ENCODE measurements at regions of chr1 and their contacts with region 1.

Region 1: DNA sequence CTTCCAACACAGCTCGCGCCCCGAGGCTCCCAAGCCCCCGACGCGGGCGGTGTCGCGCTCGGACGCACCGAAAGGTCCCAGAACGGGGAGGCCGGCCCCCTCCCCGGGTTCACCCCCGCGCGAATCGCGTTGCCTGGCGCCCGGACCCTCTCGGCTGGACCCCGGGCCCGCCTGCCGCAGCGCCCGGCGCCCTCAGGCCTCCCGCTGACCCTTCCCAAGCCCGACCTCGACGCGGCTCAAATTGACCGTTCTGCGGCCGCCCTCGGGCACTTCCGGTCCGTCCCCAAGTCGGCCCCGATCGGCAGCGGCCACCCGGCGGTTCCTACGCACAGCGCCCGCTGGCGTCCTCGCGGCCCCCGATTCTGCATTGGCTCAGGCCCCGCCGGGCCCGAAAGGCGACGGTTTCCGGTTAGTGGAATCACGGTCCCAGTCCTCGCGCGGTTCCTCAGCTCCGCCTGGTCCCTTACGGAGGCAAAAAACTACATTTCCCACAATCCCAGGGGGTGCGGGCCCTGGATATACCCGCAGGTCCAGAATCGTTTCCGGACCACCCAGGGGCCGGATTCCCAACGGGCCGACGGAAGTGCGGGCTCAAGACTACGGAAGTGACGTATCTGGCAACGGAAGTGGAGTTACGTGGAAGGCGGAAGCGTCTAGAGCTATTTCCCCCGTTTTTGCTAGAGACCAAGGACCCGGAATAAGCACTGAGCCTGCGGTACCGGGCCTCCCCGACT is at the start of gene AURKAIP1:
- DNase-seq: peak; percentile 99
- CTCF ChIP-seq: peak; percentile 41

Region 2: DNA sequence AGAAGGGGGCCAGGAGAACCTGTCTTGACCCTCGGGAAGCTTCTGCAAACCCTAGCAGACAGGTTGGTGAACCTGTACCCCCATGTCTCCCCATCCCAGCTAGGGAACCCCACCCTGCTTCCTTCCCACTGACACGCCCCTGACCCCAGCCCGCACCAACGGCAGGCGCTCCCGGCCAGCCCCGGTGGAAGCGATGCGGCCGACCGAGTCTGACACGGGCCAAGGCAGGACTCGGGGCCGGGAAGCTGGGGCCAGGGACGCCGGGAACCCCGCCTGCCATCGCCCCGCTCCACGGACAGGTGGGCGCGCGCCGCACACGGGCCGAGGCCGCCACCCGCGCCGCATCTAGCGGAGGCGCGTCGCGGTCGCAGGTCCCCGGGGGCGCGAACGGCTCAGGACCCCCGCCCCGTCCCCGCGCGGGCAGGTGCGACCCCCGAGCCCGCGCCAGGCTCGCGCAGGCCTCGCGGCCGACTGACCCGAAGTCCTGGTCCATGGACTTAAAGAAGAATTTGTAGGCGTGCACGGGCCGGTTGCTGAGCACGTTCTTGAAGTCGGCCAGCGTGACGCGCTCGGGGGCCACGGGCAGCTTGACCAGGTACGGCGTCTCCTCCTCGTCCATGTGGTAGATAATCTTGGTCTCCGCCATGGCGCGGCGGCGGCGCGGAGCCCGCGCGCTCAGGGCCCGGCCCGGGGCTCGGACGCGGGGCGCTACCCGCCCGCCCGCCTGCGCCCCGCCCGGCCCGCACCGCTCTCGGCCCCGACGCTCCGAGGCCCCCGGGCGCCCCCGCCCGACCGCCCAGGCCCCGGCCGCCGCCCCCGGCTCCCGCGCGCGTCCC is 26.5 kb before region 1 on chr1:
- CTCF ChIA-PET with region 1: interaction called, 29 read pairs
- POLR2A ChIA-PET with region 1: no interaction called
- DNase-seq: no peak
- CTCF ChIP-seq: no peak

Region 3: GRCh38 chr1:1361982-1362423 is 13.1 kb before region 1 on chr1:
- CTCF ChIA-PET with region 1: interaction called, 15 read pairs
- POLR2A ChIA-PET with region 1: no interaction called
- DNase-seq: no peak
- CTCF ChIP-seq: no peak

Region 4: DNA sequence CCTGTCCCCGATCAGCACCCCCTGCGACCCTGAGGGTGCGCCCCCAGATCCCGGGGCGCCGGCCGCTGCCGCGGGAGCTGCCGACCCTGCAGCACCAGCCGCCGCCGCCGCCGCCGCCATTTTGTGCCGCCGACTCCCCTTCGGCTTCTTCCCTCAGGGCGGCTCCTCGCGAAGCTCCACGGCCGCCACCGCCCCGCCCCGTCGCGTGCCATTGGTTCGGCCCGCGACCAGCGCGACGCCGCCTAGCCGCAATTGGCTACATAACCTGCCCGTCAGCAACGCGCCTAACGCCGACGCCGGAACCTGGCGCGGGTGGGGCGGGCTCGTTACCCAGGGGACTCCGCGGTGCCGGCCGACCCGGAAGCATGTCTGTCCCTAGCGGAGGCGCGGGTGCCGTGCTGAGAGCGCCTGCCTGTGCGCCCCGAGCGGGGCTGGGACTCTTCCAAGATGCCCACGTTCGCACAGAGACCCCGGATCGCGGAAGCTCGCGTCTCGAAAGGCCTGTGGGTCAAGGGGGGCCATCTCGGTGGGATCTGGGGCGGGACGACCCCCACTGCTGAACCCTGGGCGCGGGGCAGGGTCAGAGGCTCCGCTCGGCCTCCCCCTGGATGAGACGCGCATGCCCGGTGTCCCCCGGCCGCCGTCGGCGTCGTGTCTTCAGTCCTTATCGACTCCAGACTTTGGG is 24.2 kb after region 1 on chr1 and contains the start of gene CCNL2:
- CTCF ChIA-PET with region 1: interaction called, 20 read pairs
- POLR2A ChIA-PET with region 1: interaction called, 7 read pairs
- DNase-seq: peak; percentile 99
- CTCF ChIP-seq: no peak

Region 5: DNA sequence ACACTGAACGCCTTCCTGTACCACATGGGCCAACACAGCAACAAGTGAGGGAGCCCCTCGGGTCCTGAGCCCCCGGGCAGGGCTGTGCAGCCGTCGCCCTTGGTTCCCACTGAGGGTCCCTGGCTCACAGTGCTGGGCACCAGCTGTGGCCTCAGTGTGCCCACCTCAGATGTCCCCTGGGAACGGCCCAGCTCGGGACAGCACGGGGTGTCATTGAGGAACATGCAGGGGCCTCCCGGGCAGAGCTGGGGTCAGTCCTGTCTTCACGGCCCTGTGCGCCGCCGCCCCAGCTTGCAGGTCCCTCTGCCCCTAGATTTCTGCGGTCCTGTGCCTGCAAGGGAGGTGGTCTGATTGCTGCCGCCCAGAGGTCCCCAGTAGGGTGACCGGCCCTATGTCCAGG is 114.1 kb after region 1 on chr1:
- CTCF ChIA-PET with region 1: no interaction called
- POLR2A ChIA-PET with region 1: no interaction called
- DNase-seq: no peak
- CTCF ChIP-seq: no peak